ENCODE measurements at regions of chr16 and their contacts with region 1.

Region 1: DNA sequence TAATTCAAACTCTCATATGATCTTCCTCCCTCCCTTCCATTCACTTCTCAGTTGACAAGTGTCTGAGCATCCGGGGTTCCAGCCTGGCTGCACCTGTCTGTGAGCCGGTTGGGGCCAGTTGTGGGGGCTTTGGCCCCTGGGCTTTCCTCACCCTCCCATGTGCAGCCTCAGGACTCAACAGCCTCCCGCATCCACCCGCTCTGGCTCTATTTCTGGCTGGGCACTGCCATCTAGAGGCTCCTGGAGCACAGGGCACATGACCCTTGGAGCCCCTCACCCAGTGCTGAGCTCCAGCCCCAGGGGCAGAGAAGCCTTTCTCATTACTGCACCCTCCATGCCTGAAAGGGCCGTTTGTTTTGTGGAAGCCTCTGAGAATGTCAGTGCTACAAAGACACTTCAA is 43.3 kb downstream of the HAPSTR1 start:
- DNase-seq: peak; percentile 74
- ATAC-seq: peak; percentile 63
- H3K4me3 ChIP-seq: no peak overlapping the region
- H3K4me3 Mint-ChIP-seq: no peak overlapping the region
- H3K27ac ChIP-seq: no peak overlapping the region
- H3K27ac Mint-ChIP-seq: peak overlapping the region; percentile 70
- H3K4me1 ChIP-seq: peaks cover 23 to 38% of the 10 kb centered on the region in 2 donors
- H3K4me1 Mint-ChIP-seq: peaks cover 37% of the 10 kb centered on the region
- H3K27me3 ChIP-seq: peaks cover 0 to 3% (median 0%) of the 10 kb centered on the region in 4 experiments
- H3K27me3 Mint-ChIP-seq: peaks cover 3% of the 10 kb centered on the region
- CTCF ChIP-seq: peak; percentile 76

Region 2: GRCh38 chr16:8611886-8612600 is 522.7 kb before region 1 on chr16:
- CTCF ChIA-PET with region 1: no interaction called
- POLR2A ChIA-PET with region 1: no interaction called
- intact Hi-C with region 1: no loop called
- DNase-seq: no peak
- ATAC-seq: no peak
- H3K4me3 ChIP-seq: no peak overlapping the region
- H3K4me3 Mint-ChIP-seq: no peak overlapping the region
- H3K27ac ChIP-seq: no peak overlapping the region
- H3K27ac Mint-ChIP-seq: no peak overlapping the region
- H3K4me1 ChIP-seq: no peaks in the 10 kb centered on the region
- H3K4me1 Mint-ChIP-seq: no peaks in the 10 kb centered on the region
- H3K27me3 ChIP-seq: peaks cover 0 to 34% (median 6%) of the 10 kb centered on the region in 4 experiments
- H3K27me3 Mint-ChIP-seq: peaks cover 50% of the 10 kb centered on the region
- CTCF ChIP-seq: no peak

Region 3: GRCh38 chr16:8674413-8675022 is 460.2 kb before region 1 on chr16 and contains the start of gene ABAT:
- CTCF ChIA-PET with region 1: interaction called, 4 read pairs
- POLR2A ChIA-PET with region 1: no interaction called
- intact Hi-C with region 1: loop called (anchors 10 kb)
- DNase-seq: peak; percentile 90
- ATAC-seq: peak; percentile 100
- H3K4me3 ChIP-seq: peak within 1 kb of the TSS; percentile 71 to 99 (median 81)
- H3K4me3 Mint-ChIP-seq: peak within 1 kb of the TSS; percentile 92
- H3K27ac ChIP-seq: peak within 1 kb of the TSS; percentile 51 to 83
- H3K27ac Mint-ChIP-seq: peak within 1 kb of the TSS; percentile 86
- H3K4me1 ChIP-seq: peaks cover 17 to 18% of the 10 kb centered on the region in 2 donors
- H3K4me1 Mint-ChIP-seq: peaks cover 24% of the 10 kb centered on the region
- H3K27me3 ChIP-seq: no peaks in the 10 kb centered on the region
- H3K27me3 Mint-ChIP-seq: no peaks in the 10 kb centered on the region
- CTCF ChIP-seq: no peak
- total RNA-seq, gene ABAT: 13.8 and 14.3 TPM in 2 replicates

Region 4: DNA sequence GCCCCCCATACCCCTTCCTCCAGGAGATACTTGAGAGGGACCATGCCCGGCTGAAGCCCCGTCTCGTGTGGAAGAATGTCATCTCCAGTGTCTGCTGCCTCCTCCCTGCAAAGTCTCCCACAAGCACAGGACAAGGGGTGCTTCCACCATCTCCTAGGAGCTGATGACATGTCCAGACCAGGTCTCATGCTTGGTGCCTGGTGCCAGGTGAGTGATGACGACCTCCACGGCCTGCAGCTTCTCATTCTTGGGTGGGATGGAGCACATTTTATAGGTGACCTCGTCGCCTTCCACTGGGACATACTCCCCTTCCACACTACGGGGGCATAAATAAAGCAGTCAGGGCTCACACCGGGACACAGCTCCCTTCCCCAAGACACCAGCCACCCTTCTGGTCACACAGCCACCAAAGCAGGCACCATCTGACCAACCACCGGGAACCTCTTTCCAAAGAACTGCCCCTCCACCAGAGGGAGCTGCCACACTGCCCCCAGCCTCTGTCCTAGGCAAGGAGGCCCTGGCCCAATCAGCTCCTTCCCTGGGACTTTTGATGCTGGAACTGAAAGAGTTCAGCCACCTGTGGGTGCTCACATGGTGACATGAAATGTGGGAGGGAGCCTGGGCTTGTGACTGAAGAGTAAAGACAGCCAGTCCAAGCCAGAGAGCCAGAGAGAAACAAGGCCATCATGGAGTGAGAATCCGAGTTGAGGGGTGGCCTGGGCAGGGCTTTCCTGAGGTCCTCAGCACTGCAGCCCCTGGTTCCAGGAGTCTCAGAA is 279.5 kb before region 1 on chr16:
- CTCF ChIA-PET with region 1: no interaction called
- POLR2A ChIA-PET with region 1: no interaction called
- intact Hi-C with region 1: no loop called
- DNase-seq: no peak
- ATAC-seq: no peak
- H3K4me3 ChIP-seq: no peak overlapping the region
- H3K4me3 Mint-ChIP-seq: no peak overlapping the region
- H3K27ac ChIP-seq: no peak overlapping the region
- H3K27ac Mint-ChIP-seq: no peak overlapping the region
- H3K4me1 ChIP-seq: peaks cover 5% of the 10 kb centered on the region in 2 donors
- H3K4me1 Mint-ChIP-seq: peaks cover 18% of the 10 kb centered on the region
- H3K27me3 ChIP-seq: no peaks in the 10 kb centered on the region
- H3K27me3 Mint-ChIP-seq: no peaks in the 10 kb centered on the region
- CTCF ChIP-seq: no peak

Region 5: GRCh38 chr16:8885674-8886592 is 248.8 kb before region 1 on chr16:
- CTCF ChIA-PET with region 1: interaction called, 22 read pairs
- POLR2A ChIA-PET with region 1: interaction called, 3 read pairs
- intact Hi-C with region 1: loop called (anchors 1 kb)
- DNase-seq: peak; percentile 39
- ATAC-seq: no peak
- H3K4me3 ChIP-seq: no peak overlapping the region
- H3K4me3 Mint-ChIP-seq: no peak overlapping the region
- H3K27ac ChIP-seq: no peak overlapping the region
- H3K27ac Mint-ChIP-seq: peak overlapping the region; percentile 71
- H3K4me1 ChIP-seq: peaks cover 5 to 21% of the 10 kb centered on the region in 2 donors
- H3K4me1 Mint-ChIP-seq: peaks cover 23% of the 10 kb centered on the region
- H3K27me3 ChIP-seq: peaks cover 0 to 11% (median 5%) of the 10 kb centered on the region in 4 experiments
- H3K27me3 Mint-ChIP-seq: peaks cover 12% of the 10 kb centered on the region
- CTCF ChIP-seq: no peak

Region 6: GRCh38 chr16:8936421-8936820 is 198.3 kb before region 1 on chr16:
- CTCF ChIA-PET with region 1: interaction called, 28 read pairs
- POLR2A ChIA-PET with region 1: no interaction called
- intact Hi-C with region 1: loop called (anchors 10 kb)
- DNase-seq: peak; percentile 69
- ATAC-seq: peak; percentile 89
- H3K4me3 ChIP-seq: no peak overlapping the region
- H3K4me3 Mint-ChIP-seq: no peak overlapping the region
- H3K27ac ChIP-seq: no peak overlapping the region
- H3K27ac Mint-ChIP-seq: peak overlapping the region; percentile 7
- H3K4me1 ChIP-seq: peaks cover 58 to 63% of the 10 kb centered on the region in 2 donors
- H3K4me1 Mint-ChIP-seq: peaks cover 81% of the 10 kb centered on the region
- H3K27me3 ChIP-seq: no peaks in the 10 kb centered on the region
- H3K27me3 Mint-ChIP-seq: no peaks in the 10 kb centered on the region
- CTCF ChIP-seq: peak; percentile 73

Region 7: DNA sequence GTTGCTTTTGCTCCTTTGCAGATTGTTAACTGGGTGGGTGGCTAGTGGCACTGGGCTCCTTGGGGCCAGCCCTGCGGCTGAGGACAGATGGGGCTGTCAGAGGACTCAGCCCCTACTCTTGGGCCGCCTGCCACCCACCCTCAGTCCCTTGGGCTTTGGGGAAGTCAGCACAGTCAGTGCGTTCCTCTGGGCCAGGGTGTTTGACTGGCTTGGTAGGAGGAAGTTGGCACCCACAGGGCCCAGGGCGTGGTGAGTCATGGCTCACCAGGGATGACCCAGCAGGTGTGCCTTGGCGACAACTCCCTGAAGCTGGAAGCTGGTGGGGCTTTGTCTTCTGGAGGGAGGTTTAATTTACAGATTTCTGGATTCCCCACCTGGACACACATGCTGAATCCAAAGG is 10.9 kb before region 1 on chr16:
- CTCF ChIA-PET with region 1: interaction called, 16 read pairs
- POLR2A ChIA-PET with region 1: interaction called, 11 read pairs
- intact Hi-C with region 1: no loop called
- DNase-seq: peak; percentile 75
- ATAC-seq: peak; percentile 88
- H3K4me3 ChIP-seq: peak overlapping the region in 1 of 5 experiments; percentile 7
- H3K4me3 Mint-ChIP-seq: peak overlapping the region; percentile 59
- H3K27ac ChIP-seq: peak overlapping the region in 1 of 2 donors; percentile 34
- H3K27ac Mint-ChIP-seq: peak overlapping the region; percentile 83
- H3K4me1 ChIP-seq: peaks cover 59 to 63% of the 10 kb centered on the region in 2 donors
- H3K4me1 Mint-ChIP-seq: peaks cover 59% of the 10 kb centered on the region
- H3K27me3 ChIP-seq: no peaks in the 10 kb centered on the region
- H3K27me3 Mint-ChIP-seq: no peaks in the 10 kb centered on the region
- CTCF ChIP-seq: no peak

Region 8: GRCh38 chr16:9567666-9568065 is 432.9 kb after region 1 on chr16:
- CTCF ChIA-PET with region 1: no interaction called
- POLR2A ChIA-PET with region 1: no interaction called
- intact Hi-C with region 1: no loop called
- DNase-seq: no peak
- ATAC-seq: no peak
- H3K4me3 ChIP-seq: no peak overlapping the region
- H3K4me3 Mint-ChIP-seq: no peak overlapping the region
- H3K27ac ChIP-seq: no peak overlapping the region
- H3K27ac Mint-ChIP-seq: no peak overlapping the region
- H3K4me1 ChIP-seq: no peaks in the 10 kb centered on the region
- H3K4me1 Mint-ChIP-seq: no peaks in the 10 kb centered on the region
- H3K27me3 ChIP-seq: no peaks in the 10 kb centered on the region
- H3K27me3 Mint-ChIP-seq: peaks cover 8% of the 10 kb centered on the region
- CTCF ChIP-seq: no peak

Region 9: GRCh38 chr16:10181196-10182162 is 1046.7 kb after region 1 on chr16:
- CTCF ChIA-PET with region 1: interaction called, 4 read pairs
- POLR2A ChIA-PET with region 1: no interaction called
- intact Hi-C with region 1: loop called (anchors 5 kb)
- DNase-seq: peak; percentile 77
- ATAC-seq: peak; percentile 61
- H3K4me3 ChIP-seq: peak overlapping the region in 4 of 5 experiments; percentile 18 to 59 (median 46)
- H3K4me3 Mint-ChIP-seq: peak overlapping the region; percentile 86
- H3K27ac ChIP-seq: no peak overlapping the region
- H3K27ac Mint-ChIP-seq: no peak overlapping the region
- H3K4me1 ChIP-seq: peaks cover 29 to 35% of the 10 kb centered on the region in 2 donors
- H3K4me1 Mint-ChIP-seq: peaks cover 22% of the 10 kb centered on the region
- H3K27me3 ChIP-seq: peaks cover 0 to 57% (median 25%) of the 10 kb centered on the region in 4 experiments
- H3K27me3 Mint-ChIP-seq: peaks cover 72% of the 10 kb centered on the region
- CTCF ChIP-seq: peak; percentile 79

Measured in B cell (primary cell).